ENCODE measurements at regions of chr14 and their contacts with region 1.

Region 1: GRCh38 chr14:77097700-77098528 is at the start of gene CIPC:
- DNase-seq: peak; percentile 100
- H3K4me3 Mint-ChIP-seq: peak within 1 kb of the TSS; percentile 85
- H3K27ac Mint-ChIP-seq: peak within 1 kb of the TSS; percentile 84
- H3K4me1 Mint-ChIP-seq: peaks cover 36% of the 10 kb centered on the region
- H3K27me3 Mint-ChIP-seq: no peaks in the 10 kb centered on the region
- total RNA-seq, gene CIPC: 7.3 to 7.5 TPM

Region 2: DNA sequence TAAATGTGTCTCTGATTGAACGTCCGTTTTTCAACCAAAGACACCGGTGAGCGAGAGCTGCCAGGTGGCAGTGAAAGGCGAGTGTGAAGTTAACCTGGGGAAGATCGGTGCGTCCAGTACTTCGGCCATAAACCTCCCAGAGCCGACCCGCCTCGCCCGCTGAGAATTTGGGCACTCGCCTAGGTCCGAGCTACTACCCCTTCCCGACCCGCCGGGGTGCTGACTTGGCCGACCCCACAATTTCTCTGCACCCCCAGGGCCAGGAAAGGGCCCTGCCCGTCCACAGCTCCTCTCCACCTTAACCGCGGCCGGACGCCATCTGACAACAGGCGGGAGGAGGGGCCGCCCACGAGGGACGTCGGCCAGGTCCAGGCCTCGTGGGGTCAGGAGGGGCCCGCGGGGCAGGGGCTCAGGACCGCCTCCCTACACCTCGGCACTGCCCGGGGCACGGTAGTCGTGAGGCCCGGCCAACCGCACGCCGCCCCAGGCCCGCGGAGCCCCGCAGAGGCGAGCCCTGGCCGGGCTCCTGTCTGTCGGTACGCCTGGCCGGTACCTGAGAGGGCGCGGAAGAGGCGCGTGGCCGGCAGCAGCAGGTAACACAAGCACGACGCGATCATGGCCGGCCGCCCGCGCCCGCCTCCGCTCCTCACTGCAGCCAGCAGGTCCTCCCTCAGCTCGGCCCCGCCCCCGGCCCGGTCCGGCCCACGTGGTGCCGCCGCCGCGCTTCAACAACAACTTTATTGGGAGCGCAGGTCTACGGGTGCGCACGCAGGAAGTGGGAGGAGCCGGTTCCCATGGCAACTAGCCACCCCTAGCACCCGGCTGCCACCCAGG is 285.5 kb before region 1 on chr14 and contains the start of gene ANGEL1:
- CTCF ChIA-PET with region 1: no interaction called
- POLR2A ChIA-PET with region 1: interaction called, 3 read pairs
- intact Hi-C with region 1: loop called (anchors 1 kb)
- DNase-seq: peak; percentile 98
- H3K4me3 Mint-ChIP-seq: peak within 1 kb of the TSS; percentile 92
- H3K27ac Mint-ChIP-seq: peak within 1 kb of the TSS; percentile 80
- H3K4me1 Mint-ChIP-seq: peaks cover 19% of the 10 kb centered on the region
- H3K27me3 Mint-ChIP-seq: no peaks in the 10 kb centered on the region
- total RNA-seq, gene ANGEL1: 14.6 to 15.9 TPM

Region 3: GRCh38 chr14:76956316-76957090 is 141.4 kb before region 1 on chr14:
- CTCF ChIA-PET with region 1: interaction called, 3 read pairs
- POLR2A ChIA-PET with region 1: no interaction called
- intact Hi-C with region 1: loop called (anchors 1 kb)
- DNase-seq: peak; percentile 97
- H3K4me3 Mint-ChIP-seq: peak overlapping the region; percentile 79
- H3K27ac Mint-ChIP-seq: peak overlapping the region; percentile 99
- H3K4me1 Mint-ChIP-seq: peaks cover 77% of the 10 kb centered on the region
- H3K27me3 Mint-ChIP-seq: no peaks in the 10 kb centered on the region

Region 4: DNA sequence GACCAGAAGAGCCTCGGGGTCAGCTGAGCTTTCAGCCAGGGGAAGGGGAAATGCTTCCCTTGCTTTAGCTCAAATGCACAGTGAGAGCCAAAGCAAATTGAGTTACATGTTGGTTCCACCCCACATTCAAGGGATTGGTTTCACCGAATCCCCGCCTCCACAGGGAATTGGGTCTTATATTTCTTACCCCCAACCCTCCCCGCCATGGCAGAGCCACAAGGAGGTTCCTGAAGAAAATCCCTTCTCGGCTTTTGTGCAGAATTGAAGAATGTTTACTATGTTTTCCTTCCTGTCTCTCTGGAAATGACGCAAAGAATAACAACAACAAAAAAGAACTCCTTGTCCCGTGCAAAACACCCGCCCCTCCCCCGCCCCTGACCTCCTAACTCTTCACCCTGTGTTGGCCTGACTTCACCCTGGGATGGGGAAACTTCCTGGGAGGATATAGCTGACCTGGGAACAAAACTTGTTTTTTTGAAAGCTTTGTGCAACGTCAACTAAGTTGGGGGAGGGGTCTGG is 21.7 kb before region 1 on chr14:
- CTCF ChIA-PET with region 1: interaction called, 103 read pairs
- POLR2A ChIA-PET with region 1: no interaction called
- intact Hi-C with region 1: loop called (anchors 2 kb)
- DNase-seq: no peak
- H3K4me3 Mint-ChIP-seq: no peak overlapping the region
- H3K27ac Mint-ChIP-seq: no peak overlapping the region
- H3K4me1 Mint-ChIP-seq: no peaks in the 10 kb centered on the region
- H3K27me3 Mint-ChIP-seq: peaks cover under 1% of the 10 kb centered on the region

Region 5: GRCh38 chr14:77320238-77320935 is 222.5 kb after region 1 on chr14 and contains the start of gene POMT2:
- CTCF ChIA-PET with region 1: interaction called, 5 read pairs
- POLR2A ChIA-PET with region 1: interaction called, 4 read pairs
- intact Hi-C with region 1: loop called (anchors 1 kb)
- DNase-seq: peak; percentile 95
- H3K4me3 Mint-ChIP-seq: peak within 1 kb of the TSS; percentile 93
- H3K27ac Mint-ChIP-seq: peak within 1 kb of the TSS; percentile 99
- H3K4me1 Mint-ChIP-seq: peaks cover 17% of the 10 kb centered on the region
- H3K27me3 Mint-ChIP-seq: no peaks in the 10 kb centered on the region
- total RNA-seq, gene POMT2: 12.9 to 13.1 TPM